Brain microvascular endothelial cell (primary cell): ENCODE measurements at regions of chr3 and their contacts with region 1.

Region 1: DNA sequence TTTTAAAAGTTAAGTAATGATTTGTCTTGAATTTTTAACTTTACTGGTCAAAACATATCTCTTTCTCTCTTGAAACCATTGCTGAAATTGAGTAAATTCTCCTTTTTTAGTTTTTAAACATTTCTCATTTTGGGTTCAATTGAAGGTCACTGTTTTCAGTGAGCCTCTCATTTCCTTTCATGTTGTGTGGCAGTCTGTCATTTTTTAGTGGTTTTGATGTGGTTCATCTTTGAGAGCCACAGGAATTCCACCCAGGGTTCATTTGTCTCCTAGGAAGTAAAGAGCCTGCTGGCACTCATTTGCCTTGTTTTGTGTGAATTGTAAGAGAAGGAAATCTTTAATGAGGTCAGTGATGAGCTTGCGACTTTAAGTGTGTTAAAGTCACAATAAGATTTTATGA is 10.4 kb downstream of the CLDN11 start:
- DNase-seq: peak; percentile 89
- H3K4me3 ChIP-seq: no peak overlapping the region
- H3K27ac ChIP-seq: peak overlapping the region; percentile 61
- H3K27me3 ChIP-seq: no peaks in the 10 kb centered on the region
- CTCF ChIP-seq: no peak

Region 2: DNA sequence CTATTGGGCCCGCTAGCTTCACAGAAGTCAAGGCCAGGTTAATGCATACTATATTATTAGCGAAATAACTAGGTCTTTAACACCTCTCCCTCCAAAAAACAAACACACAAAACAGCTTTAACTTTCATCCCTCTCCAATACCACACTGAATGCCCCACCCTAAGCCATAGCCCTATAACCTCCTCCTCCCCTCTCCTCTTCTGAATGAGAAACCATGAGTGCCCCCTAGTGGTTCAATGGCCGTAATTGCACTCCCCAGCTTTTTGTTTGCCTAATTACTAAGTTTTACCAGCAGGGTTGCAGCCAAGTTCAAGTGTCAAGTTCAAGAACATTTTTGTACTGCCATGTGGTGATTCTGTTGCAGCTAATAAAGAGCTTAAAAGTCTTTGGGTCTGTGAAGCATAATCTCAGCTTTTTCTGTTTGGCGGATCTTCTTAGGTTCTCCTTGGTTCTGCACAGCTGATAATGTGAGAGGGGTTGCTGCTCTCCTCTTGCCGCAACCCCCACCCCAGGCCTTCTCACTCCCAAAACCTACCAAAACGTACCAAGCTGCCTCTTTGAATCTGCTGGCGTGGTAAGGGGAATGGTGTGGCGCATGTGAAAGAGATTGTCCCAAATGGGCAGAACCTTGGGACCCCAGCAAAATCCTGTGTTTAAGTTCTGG is 383.0 kb after region 1 on chr3:
- in situ Hi-C with region 1: loop called (anchors 25 kb)
- DNase-seq: peak; percentile 81
- H3K4me3 ChIP-seq: no peak overlapping the region
- H3K27ac ChIP-seq: no peak overlapping the region
- H3K27me3 ChIP-seq: no peaks in the 10 kb centered on the region
- CTCF ChIP-seq: peak; percentile 93